ENCODE measurements at regions of chr7 and their contacts with region 1.

Region 1: DNA sequence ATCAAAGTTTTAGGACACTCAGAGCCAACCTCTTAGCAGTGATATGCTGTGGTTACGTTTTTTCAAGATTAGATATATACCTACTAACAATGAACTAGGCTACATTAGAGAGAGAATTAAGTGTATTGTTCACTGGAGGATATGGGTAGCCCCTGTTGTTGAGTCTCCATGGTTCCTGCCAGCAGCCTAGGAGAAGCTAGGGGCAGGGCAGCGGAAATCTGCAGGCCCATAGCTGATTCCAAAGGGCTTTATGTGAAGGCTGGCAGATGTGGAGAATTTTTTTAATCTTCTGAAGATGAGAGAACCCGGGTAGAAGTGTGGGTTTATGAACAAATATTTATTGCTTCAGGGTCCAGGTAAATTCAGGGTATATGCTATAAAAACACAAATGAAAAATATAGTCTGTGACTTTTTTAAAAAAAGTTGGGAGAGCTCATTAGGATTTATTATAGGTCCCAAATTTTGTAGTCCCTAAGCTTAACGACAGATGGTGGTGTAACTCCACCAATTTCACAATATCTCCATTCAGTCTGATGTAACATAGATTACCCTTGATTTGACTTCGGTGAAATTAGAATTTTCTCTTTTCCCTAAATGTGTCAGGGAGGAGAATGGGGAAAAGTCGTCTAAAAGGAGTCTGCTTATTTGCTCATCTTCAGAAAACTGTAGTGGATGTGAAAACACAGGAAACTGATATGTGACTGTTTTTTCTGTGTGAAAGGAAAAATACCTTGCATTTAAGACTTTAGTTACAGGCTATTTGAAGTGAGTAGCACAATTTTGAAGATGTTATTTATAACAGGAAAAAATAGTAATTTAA is 163.0 kb upstream of the PPP1R3A start:
- DNase-seq: no peak
- H3K4me3 ChIP-seq: no peak overlapping the region
- H3K27ac ChIP-seq: no peak overlapping the region
- H3K4me1 ChIP-seq: no peaks in the 10 kb centered on the region
- H3K27me3 ChIP-seq: peaks cover 0 to 46% of the 10 kb centered on the region in 2 donors
- CTCF ChIP-seq: peak in 2 of 3 donors; percentile 52 to 60
- POLR2A ChIP-seq: no peak

Region 2: GRCh38 chr7:114107522-114107921 is 25.7 kb after region 1 on chr7:
- intact Hi-C with region 1: no loop called
- DNase-seq: no peak
- H3K4me3 ChIP-seq: no peak overlapping the region
- H3K27ac ChIP-seq: no peak overlapping the region
- H3K4me1 ChIP-seq: no peaks in the 10 kb centered on the region
- H3K27me3 ChIP-seq: no peaks in the 10 kb centered on the region
- CTCF ChIP-seq: no peak
- POLR2A ChIP-seq: no peak

Region 3: DNA sequence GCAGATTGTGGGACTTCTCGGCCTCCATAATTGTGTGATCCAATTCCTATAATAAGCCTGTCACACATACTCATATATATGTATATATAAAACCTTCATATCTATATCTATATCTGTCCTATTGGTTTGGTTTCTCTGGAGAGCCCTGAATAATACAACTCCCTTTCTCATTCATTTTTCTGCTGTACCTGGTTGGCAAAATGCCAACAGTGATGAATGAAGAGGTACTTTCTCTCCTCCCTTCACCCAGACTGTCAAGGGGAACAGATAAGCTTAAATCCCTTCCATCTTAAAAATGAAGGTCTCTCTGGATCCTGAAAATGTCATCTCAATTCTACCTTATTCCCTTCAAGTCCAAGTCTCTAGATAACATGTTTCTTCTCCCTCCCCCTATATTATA is 272.5 kb after region 1 on chr7:
- intact Hi-C with region 1: loop called (anchors 5 kb)
- DNase-seq: no peak
- H3K4me3 ChIP-seq: no peak overlapping the region
- H3K27ac ChIP-seq: no peak overlapping the region
- H3K4me1 ChIP-seq: no peaks in the 10 kb centered on the region
- H3K27me3 ChIP-seq: no peaks in the 10 kb centered on the region
- CTCF ChIP-seq: no peak
- POLR2A ChIP-seq: no peak

Region 4: GRCh38 chr7:114598946-114599345 is 517.1 kb after region 1 on chr7:
- intact Hi-C with region 1: loop called (anchors 5 kb)
- DNase-seq: no peak
- H3K4me3 ChIP-seq: no peak overlapping the region
- H3K27ac ChIP-seq: no peak overlapping the region
- H3K4me1 ChIP-seq: no peaks in the 10 kb centered on the region
- H3K27me3 ChIP-seq: no peaks in the 10 kb centered on the region
- CTCF ChIP-seq: no peak
- POLR2A ChIP-seq: no peak

Region 5: GRCh38 chr7:114670676-114671075 is 588.9 kb after region 1 on chr7:
- intact Hi-C with region 1: no loop called
- DNase-seq: no peak
- H3K4me3 ChIP-seq: no peak overlapping the region
- H3K27ac ChIP-seq: no peak overlapping the region
- H3K4me1 ChIP-seq: no peaks in the 10 kb centered on the region
- H3K27me3 ChIP-seq: no peaks in the 10 kb centered on the region
- CTCF ChIP-seq: no peak
- POLR2A ChIP-seq: no peak